IMR-90 (cell line): ENCODE measurements at regions of chr12 and their contacts with region 1.

Region 1: DNA sequence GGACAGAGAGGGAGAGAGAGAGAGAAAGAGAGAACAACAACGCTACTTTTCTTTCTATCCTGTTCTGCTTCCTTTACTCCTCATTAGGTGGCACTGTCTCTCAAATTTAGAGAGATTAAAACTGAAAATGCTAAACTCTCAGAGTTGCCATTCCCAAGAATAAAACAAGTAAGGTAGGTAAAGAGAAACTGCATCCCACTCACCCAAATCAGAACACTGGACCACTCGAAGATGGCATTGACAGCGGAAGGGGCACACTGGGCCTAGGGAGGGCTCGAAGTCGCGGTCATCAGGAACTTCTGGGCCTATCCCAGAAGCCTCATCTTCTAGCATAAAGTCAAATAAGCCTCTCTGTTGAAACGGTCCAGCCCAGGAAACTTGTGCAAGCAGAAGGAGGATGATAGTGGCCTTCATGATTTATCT is 4.5 kb downstream of the DCN start:
- DNase-seq: peak; percentile 62
- ATAC-seq: peak; percentile 8
- H3K4me3 ChIP-seq: peak overlapping the region; percentile 94
- H3K27ac ChIP-seq: peak overlapping the region; percentile 99
- H3K4me1 ChIP-seq: peaks cover 7% of the 10 kb centered on the region
- H3K27me3 ChIP-seq: no peaks in the 10 kb centered on the region
- CTCF ChIP-seq: peak; percentile 70
- POLR2A ChIP-seq: no peak
- RAD21 ChIP-seq: peak; percentile 74

Region 2: GRCh38 chr12:91215940-91216454 is 37.8 kb after region 1 on chr12:
- CTCF ChIA-PET with region 1: no interaction called
- POLR2A ChIA-PET with region 1: no interaction called
- dilution Hi-C with region 1: no loop called
- in situ Hi-C with region 1: no loop called
- intact Hi-C with region 1: loop called (anchors 2 kb)
- DNase-seq: peak; percentile 95
- ATAC-seq: peak; percentile 89
- H3K4me3 ChIP-seq: no peak overlapping the region
- H3K27ac ChIP-seq: peak overlapping the region; percentile 94
- H3K4me1 ChIP-seq: peaks cover 6% of the 10 kb centered on the region; the same call in 1 of the 2 replicates
- H3K27me3 ChIP-seq: no peaks in the 10 kb centered on the region
- CTCF ChIP-seq: no peak
- POLR2A ChIP-seq: no peak
- RAD21 ChIP-seq: no peak

Region 3: DNA sequence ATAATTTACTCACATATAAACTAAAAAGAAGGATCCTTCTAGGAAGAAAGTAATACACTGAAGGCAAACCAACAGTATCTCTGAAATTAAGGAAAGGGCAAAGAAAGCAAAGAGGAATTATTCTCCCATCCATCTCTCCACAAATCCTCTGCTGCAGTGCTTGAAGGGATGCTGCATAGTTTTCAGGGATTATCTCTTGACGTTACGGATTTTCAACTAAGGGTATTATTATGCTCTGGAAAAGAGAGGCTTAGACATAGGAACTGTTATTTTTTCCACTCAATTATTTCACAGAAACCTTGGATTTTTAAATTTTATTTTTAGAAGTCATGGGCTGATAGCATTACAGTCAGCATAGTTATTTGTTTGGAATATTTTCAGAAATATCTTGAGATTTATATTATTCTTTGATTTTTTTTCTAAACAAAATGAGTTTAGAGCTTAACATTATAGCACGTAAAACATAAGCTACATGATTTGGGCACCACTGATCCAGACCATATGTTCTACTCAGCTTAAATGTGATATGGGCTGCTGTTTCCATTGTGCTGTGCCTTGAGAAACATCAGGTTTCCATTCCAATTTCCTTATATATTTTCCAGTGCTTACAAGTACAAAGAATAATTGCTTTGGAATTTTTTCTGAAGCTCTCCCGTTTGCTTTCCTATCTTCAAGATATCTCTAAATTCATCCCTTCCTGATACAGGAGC is 62.4 kb after region 1 on chr12:
- CTCF ChIA-PET with region 1: no interaction called
- POLR2A ChIA-PET with region 1: interaction called, 3 read pairs
- dilution Hi-C with region 1: no loop called
- in situ Hi-C with region 1: no loop called
- intact Hi-C with region 1: loop called (anchors 5 kb)
- DNase-seq: no peak
- ATAC-seq: peak; percentile 32
- H3K4me3 ChIP-seq: no peak overlapping the region
- H3K27ac ChIP-seq: peak overlapping the region; percentile 86; the same call in 1 of the 2 replicates
- H3K4me1 ChIP-seq: peaks cover 4% of the 10 kb centered on the region
- H3K27me3 ChIP-seq: no peaks in the 10 kb centered on the region
- CTCF ChIP-seq: no peak
- POLR2A ChIP-seq: no peak
- RAD21 ChIP-seq: no peak

Region 4: DNA sequence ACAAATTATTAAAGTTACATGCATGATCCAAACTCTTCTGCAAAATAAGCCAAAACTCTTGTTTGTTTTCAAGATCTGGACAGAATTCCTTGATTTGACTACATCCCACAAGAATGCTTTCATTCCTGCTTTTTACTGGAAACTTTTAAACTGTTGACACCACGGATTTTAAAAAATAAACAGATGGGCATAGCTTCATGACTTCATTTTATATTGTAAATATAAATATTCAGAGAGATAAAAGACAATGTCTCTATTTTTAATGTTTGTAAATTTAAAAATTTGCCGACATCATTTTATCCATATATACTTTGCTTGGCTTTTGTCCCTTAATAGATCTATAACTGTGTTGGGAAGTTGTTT is 138.7 kb after region 1 on chr12:
- CTCF ChIA-PET with region 1: no interaction called
- POLR2A ChIA-PET with region 1: interaction called, 3 read pairs
- dilution Hi-C with region 1: no loop called
- in situ Hi-C with region 1: no loop called
- intact Hi-C with region 1: loop called (anchors 1 kb)
- DNase-seq: peak; percentile 69
- ATAC-seq: peak; percentile 84
- H3K4me3 ChIP-seq: no peak overlapping the region
- H3K27ac ChIP-seq: peak overlapping the region; percentile 93; the same call in 1 of the 2 replicates
- H3K4me1 ChIP-seq: peaks cover 8% of the 10 kb centered on the region
- H3K27me3 ChIP-seq: no peaks in the 10 kb centered on the region
- CTCF ChIP-seq: no peak
- POLR2A ChIP-seq: no peak
- RAD21 ChIP-seq: no peak

Region 5: GRCh38 chr12:91326058-91327027 is 148.2 kb after region 1 on chr12:
- CTCF ChIA-PET with region 1: interaction called, 5 read pairs
- POLR2A ChIA-PET with region 1: interaction called, 10 read pairs
- dilution Hi-C with region 1: no loop called
- in situ Hi-C with region 1: loop called (anchors 5 kb)
- intact Hi-C with region 1: loop called (anchors 1 kb)
- DNase-seq: peak; percentile 75
- ATAC-seq: peak; percentile 70
- H3K4me3 ChIP-seq: no peak overlapping the region
- H3K27ac ChIP-seq: peak overlapping the region; percentile 87; the same call in 1 of the 2 replicates
- H3K4me1 ChIP-seq: peaks cover 7% of the 10 kb centered on the region
- H3K27me3 ChIP-seq: no peaks in the 10 kb centered on the region
- CTCF ChIP-seq: peak; percentile 84
- POLR2A ChIP-seq: no peak
- RAD21 ChIP-seq: peak; percentile 72

Region 6: GRCh38 chr12:91355150-91356006 is 177.2 kb after region 1 on chr12:
- CTCF ChIA-PET with region 1: interaction called, 3 read pairs
- POLR2A ChIA-PET with region 1: no interaction called
- dilution Hi-C with region 1: no loop called
- in situ Hi-C with region 1: no loop called
- intact Hi-C with region 1: loop called (anchors 1 kb)
- DNase-seq: peak; percentile 80
- ATAC-seq: peak; percentile 99
- H3K4me3 ChIP-seq: no peak overlapping the region
- H3K27ac ChIP-seq: no peak overlapping the region
- H3K4me1 ChIP-seq: no peaks in the 10 kb centered on the region
- H3K27me3 ChIP-seq: no peaks in the 10 kb centered on the region
- CTCF ChIP-seq: peak; percentile 96
- POLR2A ChIP-seq: no peak
- RAD21 ChIP-seq: peak; percentile 98